ENCODE measurements at regions of chr2 and their contacts with region 1.

Region 1: DNA sequence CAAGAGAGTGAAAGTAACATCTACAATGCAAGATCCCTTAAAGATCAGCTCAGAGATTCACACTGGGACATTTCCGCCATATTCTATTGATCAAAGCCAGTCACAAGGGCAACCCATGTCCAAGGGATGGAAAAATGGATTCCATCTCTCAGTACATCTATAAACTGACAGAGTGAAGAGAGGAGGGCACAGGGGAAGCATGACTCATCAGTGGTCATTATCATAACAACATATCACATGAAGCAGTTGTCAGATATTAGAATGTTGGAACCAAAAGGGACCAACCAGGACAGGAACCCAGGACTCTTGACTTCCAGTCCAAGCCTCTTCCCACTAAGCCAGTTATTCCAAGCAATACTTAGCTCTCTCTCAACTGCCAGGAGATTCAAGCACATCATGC is 54.9 kb upstream of the IGFBP2 start:
- DNase-seq: no peak
- H3K4me3 ChIP-seq: no peak overlapping the region
- H3K27ac ChIP-seq: no peak overlapping the region
- H3K4me1 ChIP-seq: peaks cover 0 to 10% of the 10 kb centered on the region in 2 donors
- H3K27me3 ChIP-seq: no peaks in the 10 kb centered on the region
- CTCF ChIP-seq: no peak

Region 2: GRCh38 chr2:216540920-216541319 is 37.4 kb before region 1 on chr2:
- intact Hi-C with region 1: no loop called
- DNase-seq: peak in 1 of 2 donors; percentile 79
- H3K4me3 ChIP-seq: no peak overlapping the region
- H3K27ac ChIP-seq: peak overlapping the region; percentile 76 to 87
- H3K4me1 ChIP-seq: peaks cover 22 to 29% of the 10 kb centered on the region in 2 donors
- H3K27me3 ChIP-seq: no peaks in the 10 kb centered on the region
- CTCF ChIP-seq: no peak

Region 3: DNA sequence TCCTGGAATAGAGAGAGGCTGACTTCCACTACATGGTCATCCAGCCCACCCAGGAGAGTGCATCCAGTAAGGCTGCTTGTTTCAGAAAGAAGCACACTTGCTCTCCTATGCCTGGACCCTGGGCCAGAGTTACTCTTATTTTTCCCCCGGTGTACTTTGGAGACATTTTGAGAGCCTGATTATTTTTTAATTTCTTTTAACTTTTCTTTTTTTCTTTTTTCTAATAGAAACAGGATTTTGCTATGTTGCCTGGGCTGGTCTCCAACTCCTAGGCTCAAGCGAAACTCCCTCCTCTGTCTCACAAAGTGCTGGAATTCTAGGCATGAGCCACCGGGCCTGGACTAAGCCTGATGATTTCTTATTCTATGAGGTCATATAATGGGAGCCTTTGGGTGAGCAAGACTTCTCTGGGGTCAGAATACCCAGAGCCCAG is 17.5 kb before region 1 on chr2:
- intact Hi-C with region 1: no loop called
- DNase-seq: peak in 1 of 2 donors; percentile 87
- H3K4me3 ChIP-seq: no peak overlapping the region
- H3K27ac ChIP-seq: peak overlapping the region; percentile 91 to 96
- H3K4me1 ChIP-seq: peaks cover 11 to 68% of the 10 kb centered on the region in 2 donors
- H3K27me3 ChIP-seq: no peaks in the 10 kb centered on the region
- CTCF ChIP-seq: no peak

Region 4: GRCh38 chr2:216619411-216620393 is 41.4 kb after region 1 on chr2:
- intact Hi-C with region 1: loop called (anchors 5 kb)
- DNase-seq: no peak
- H3K4me3 ChIP-seq: no peak overlapping the region
- H3K27ac ChIP-seq: peak overlapping the region; percentile 73 to 90
- H3K4me1 ChIP-seq: peaks cover 12 to 29% of the 10 kb centered on the region in 2 donors
- H3K27me3 ChIP-seq: no peaks in the 10 kb centered on the region
- CTCF ChIP-seq: no peak

Region 5: GRCh38 chr2:216632952-216633615 is 54.8 kb after region 1 on chr2 and contains the start of gene IGFBP2:
- intact Hi-C with region 1: loop called (anchors 5 kb)
- DNase-seq: peak in 1 of 2 donors; percentile 77
- H3K4me3 ChIP-seq: peak within 1 kb of the TSS; percentile 81 to 96
- H3K27ac ChIP-seq: peak within 1 kb of the TSS; percentile 80 to 88
- H3K4me1 ChIP-seq: peaks cover 0 to 13% of the 10 kb centered on the region in 2 donors
- H3K27me3 ChIP-seq: no peaks in the 10 kb centered on the region
- CTCF ChIP-seq: no peak
- total RNA-seq, gene IGFBP2: 1,691 TPM